Esophagus squamous epithelium (tissue), 5 donors: ENCODE measurements at regions of chr3 and their contacts with region 1.

Region 1: DNA sequence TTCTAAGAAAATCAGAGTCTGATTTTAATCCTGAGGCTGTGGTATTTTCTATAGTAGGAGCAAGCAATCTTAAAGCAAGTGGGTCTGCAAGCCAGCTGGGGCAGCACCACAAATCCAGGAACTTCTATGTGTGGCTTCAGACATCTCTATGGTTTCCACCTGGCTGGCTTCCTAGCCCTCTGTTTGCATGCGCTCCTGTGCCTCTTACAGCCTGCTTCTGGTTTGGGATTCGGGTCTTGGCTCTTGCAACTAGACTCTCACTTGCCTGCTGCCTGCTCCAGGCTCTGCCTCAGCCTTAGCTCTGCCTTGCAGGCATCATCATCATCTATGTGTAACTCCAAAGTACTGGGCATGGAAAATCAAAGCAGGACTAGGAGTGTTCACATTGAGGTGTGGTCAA is 43.4 kb downstream of the MINDY4B start:
- DNase-seq: no peak
- H3K4me3 ChIP-seq: no peak overlapping the region
- H3K27ac ChIP-seq: no peak overlapping the region
- H3K4me1 ChIP-seq: peaks cover 0 to 7% (median 0%) of the 10 kb centered on the region in 3 donors
- H3K27me3 ChIP-seq: peaks cover 0 to 5% (median 0%) of the 10 kb centered on the region in 4 donors
- CTCF ChIP-seq: no peak
- POLR2A ChIP-seq: no peak

Region 2: GRCh38 chr3:150703299-150704134 is 158.3 kb before region 1 on chr3 and contains the start of gene ERICH6:
- intact Hi-C with region 1: loop called (anchors 5 kb)
- DNase-seq: peak; percentile 58
- H3K4me3 ChIP-seq: peak within 1 kb of the TSS; percentile 43 to 78 (median 66)
- H3K27ac ChIP-seq: peak within 1 kb of the TSS; percentile 67 to 89 (median 84)
- H3K4me1 ChIP-seq: peaks cover 0 to 16% (median 7%) of the 10 kb centered on the region in 3 donors
- H3K27me3 ChIP-seq: no peaks in the 10 kb centered on the region
- CTCF ChIP-seq: peak in 4 of 6 experiments; percentile 24 to 32 (median 30)
- POLR2A ChIP-seq: peak in 1 of 4 donors; percentile 43
- total RNA-seq, gene ERICH6: not detected

Region 3: DNA sequence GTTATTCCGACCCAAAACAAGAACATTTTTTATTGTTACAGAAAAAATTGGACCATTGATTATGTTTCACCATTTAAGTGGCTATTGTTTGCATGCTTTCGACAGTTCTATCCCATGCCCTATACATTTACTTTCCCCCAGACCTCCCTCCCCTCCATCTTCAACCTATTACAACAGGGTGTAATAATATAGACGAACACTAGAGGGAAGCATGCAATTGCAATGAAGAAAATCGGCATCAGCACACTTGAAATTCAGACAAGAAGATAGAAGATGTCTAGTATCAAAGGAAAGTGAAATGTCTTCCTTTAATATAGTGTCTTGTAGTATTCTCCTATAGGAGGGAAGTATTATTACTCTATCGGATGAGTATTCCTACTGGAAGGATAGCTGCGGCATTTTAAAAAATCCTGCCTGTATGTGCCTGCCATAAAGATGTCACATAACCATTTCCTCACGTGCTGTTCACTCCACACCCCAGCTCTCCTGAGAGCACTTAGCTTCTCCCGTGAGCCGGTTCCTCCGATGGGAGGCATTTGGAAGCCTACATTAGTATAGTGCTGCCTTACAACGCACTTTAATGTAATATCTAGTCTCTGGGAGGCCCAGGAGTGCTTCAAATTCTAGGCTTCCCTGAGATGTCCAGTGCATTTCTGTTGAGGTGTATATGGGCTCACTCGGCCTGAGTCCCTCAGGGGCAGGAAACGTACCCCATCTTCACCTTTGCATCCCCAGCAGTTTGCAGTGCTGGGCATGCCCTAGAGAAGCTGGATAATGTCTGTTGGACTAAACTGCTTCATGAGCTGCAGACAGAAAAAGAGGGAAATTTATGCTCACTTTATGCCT is 140.3 kb before region 1 on chr3:
- intact Hi-C with region 1: loop called (anchors 5 kb)
- DNase-seq: no peak
- H3K4me3 ChIP-seq: no peak overlapping the region
- H3K27ac ChIP-seq: no peak overlapping the region
- H3K4me1 ChIP-seq: peaks cover 7 to 48% (median 20%) of the 10 kb centered on the region in 3 donors
- H3K27me3 ChIP-seq: no peaks in the 10 kb centered on the region
- CTCF ChIP-seq: peak; percentile 54 to 92 (median 85)
- POLR2A ChIP-seq: no peak

Region 4: GRCh38 chr3:150787741-150788370 is 74.0 kb before region 1 on chr3:
- intact Hi-C with region 1: loop called (anchors 5 kb)
- DNase-seq: no peak
- H3K4me3 ChIP-seq: no peak overlapping the region
- H3K27ac ChIP-seq: no peak overlapping the region
- H3K4me1 ChIP-seq: peaks cover 0 to 13% (median 0%) of the 10 kb centered on the region in 3 donors
- H3K27me3 ChIP-seq: peaks cover 0 to 8% (median 0%) of the 10 kb centered on the region in 4 donors
- CTCF ChIP-seq: peak; percentile 69 to 92 (median 84)
- POLR2A ChIP-seq: no peak